Activated T-helper 1 cell treated with anti-CD3 and anti-CD28 coated beads, Interleukin-12 subunit alpha, Interleukin-12 subunit beta, Interleukin-2, Interleukin-4 antibody, amounts not matched to agents 30 ng/mL and 10 ng/mL and 1 ng/mL, durations not matched to agents 14 hours and 24 hours and 36 hours (primary cell): ENCODE measurements at regions of chr19 and their contacts with region 1.

Region 1: DNA sequence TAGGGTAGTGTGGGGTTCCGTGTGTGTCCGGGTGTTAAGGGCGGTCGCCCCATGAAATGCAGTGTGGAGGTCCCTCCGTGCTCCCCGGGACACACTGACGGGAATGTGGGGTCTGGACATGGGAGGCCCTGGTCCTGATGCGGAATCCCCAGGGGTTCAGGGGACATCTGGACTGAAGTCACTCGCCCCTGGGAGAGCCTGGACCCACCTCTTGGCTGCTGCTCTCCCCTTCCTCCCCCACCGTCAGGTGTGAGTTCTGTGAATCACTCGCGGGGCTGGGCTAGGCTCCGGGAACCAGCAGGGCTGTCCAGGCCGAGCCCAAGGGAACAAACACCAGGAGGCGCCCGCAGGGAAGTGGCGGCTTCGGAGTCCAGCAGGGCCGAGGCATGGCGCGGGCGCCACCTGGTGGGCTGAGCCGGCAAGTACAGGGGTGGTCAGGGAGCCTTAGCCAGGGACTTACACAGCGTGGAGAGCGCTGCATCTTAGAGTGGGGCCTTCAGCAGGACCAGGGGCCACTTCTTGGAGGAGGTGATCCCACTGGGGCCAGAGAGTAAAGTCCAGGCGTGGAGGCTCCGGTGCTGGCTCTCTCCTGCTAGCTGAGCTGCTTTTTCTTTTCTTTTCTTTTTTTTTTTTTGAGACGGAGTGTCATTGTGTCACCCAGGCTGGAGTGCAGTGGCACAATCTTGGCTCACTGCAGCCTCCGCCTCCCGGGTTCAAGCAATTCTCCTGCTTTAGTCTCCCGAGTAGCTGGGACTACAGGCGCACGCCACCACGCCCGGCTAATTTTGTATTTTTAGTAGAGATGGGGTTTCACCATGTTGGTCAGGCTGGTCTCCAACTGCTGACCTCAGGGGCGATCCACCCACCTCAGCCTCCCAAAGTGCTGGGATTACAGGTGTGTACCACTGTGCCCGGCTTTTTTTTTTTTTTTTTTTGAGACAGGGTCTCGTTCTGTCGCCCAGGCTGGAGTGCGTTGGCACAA is 20.1 kb downstream of the WTIP start:
- DNase-seq: peak; percentile 78
- H3K4me3 Mint-ChIP-seq: no peak overlapping the region
- H3K27ac Mint-ChIP-seq: no peak overlapping the region
- H3K4me1 Mint-ChIP-seq: no peaks in the 10 kb centered on the region
- H3K27me3 Mint-ChIP-seq: peaks cover 4% of the 10 kb centered on the region

Region 2: DNA sequence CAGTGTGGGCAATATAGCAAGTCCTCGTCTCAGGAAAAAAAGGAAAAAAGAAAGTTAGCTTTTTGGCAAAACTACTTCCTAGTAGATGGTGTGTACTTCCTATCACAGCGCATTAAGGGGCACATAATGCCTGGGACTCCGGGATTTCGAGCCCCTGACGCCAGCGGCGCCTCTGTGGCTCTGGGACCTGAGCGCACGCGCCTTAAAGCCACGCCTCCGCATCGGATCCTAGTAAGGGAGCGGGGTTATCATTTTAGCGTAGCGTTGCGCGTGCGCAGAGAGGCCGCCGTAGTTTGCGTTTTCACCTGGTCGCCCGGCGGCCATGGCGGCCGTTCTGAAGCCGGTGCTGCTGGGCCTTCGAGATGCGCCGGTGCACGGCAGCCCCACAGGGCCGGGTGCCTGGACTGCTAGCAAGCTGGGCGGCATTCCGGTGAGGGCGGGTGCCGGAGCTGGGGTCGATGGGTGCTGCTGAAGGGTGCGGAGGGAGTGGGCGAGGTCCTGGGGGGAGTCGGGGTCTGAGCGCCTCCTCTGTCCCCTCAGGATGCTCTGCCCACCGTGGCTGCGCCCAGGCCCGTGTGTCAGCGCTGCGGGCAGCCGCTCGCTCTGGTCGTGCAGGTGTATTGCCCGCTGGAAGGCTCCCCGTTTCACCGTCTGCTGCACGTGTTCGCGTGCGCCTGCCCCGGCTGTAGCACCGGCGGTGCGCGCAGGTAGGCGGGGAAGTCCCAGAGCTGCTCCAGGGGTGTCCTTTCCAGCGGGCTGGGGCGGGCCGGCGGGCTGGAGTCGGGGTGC is 97.3 kb before region 1 on chr19 and contains the start of gene PDCD2L:
- intact Hi-C with region 1: loop called (anchors 5 kb)
- DNase-seq: peak; percentile 89
- H3K4me3 Mint-ChIP-seq: peak within 1 kb of the TSS; percentile 94
- H3K27ac Mint-ChIP-seq: peak within 1 kb of the TSS; percentile 86
- H3K4me1 Mint-ChIP-seq: peaks cover 13% of the 10 kb centered on the region
- H3K27me3 Mint-ChIP-seq: no peaks in the 10 kb centered on the region
- total RNA-seq, gene PDCD2L: 51.3 and 52.3 TPM in 2 replicates

Region 3: GRCh38 chr19:34475026-34475974 is 26.3 kb before region 1 on chr19:
- intact Hi-C with region 1: loop called (anchors 2 kb)
- DNase-seq: no peak
- H3K4me3 Mint-ChIP-seq: no peak overlapping the region
- H3K27ac Mint-ChIP-seq: peak overlapping the region; percentile 48
- H3K4me1 Mint-ChIP-seq: peaks cover 8% of the 10 kb centered on the region
- H3K27me3 Mint-ChIP-seq: peaks cover 11% of the 10 kb centered on the region

Region 4: DNA sequence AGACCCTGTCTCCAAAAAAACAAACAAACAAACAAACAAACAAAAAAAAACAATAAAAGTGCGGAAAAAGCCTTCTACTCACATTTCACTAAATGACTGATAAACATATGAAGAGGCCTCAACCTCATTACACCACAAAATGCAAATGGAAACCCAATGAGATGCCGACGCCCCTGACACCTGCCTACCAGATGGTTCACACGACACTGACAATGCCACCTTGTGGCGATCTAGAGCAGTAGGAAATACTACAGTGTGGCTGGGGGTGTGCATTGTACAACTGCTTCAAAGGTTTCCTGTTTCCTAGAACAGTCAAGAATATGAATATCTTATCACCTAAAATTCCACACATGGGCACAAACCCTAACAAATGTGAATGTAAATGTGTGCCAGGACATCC is 161.3 kb after region 1 on chr19:
- intact Hi-C with region 1: no loop called
- DNase-seq: peak; percentile 31
- H3K4me3 Mint-ChIP-seq: no peak overlapping the region
- H3K27ac Mint-ChIP-seq: no peak overlapping the region
- H3K4me1 Mint-ChIP-seq: peaks cover 9% of the 10 kb centered on the region
- H3K27me3 Mint-ChIP-seq: no peaks in the 10 kb centered on the region

Region 5: GRCh38 chr19:34712395-34713261 is 211.0 kb after region 1 on chr19:
- intact Hi-C with region 1: loop called (anchors 1 kb)
- DNase-seq: peak; percentile 43
- H3K4me3 Mint-ChIP-seq: no peak overlapping the region
- H3K27ac Mint-ChIP-seq: no peak overlapping the region
- H3K4me1 Mint-ChIP-seq: peaks cover 5% of the 10 kb centered on the region
- H3K27me3 Mint-ChIP-seq: peaks cover 4% of the 10 kb centered on the region

Region 6: GRCh38 chr19:34867631-34868030 is 366.0 kb after region 1 on chr19:
- intact Hi-C with region 1: no loop called
- DNase-seq: no peak
- H3K4me3 Mint-ChIP-seq: no peak overlapping the region
- H3K27ac Mint-ChIP-seq: no peak overlapping the region
- H3K4me1 Mint-ChIP-seq: no peaks in the 10 kb centered on the region
- H3K27me3 Mint-ChIP-seq: peaks cover 2% of the 10 kb centered on the region